Mucosa of descending colon (tissue), 3 donors: ENCODE measurements at regions of chr11 and their contacts with region 1.

Region 1: GRCh38 chr11:67317205-67317887 is 14.0 kb downstream of the SSH3 start:
- DNase-seq: peak; percentile 97 to 99 (median 98)
- ATAC-seq: peak; percentile 88
- H3K4me3 ChIP-seq: peak overlapping the region; percentile 74
- H3K4me1 ChIP-seq: peaks cover 11% of the 10 kb centered on the region
- CTCF ChIP-seq: peak; percentile 74

Region 2: GRCh38 chr11:67265633-67266423 is 51.5 kb before region 1 on chr11:
- intact Hi-C with region 1: loop called in 1 of 2 experiments (anchors 5 kb)
- DNase-seq: peak; percentile 84 to 91 (median 86)
- ATAC-seq: peak; percentile 60
- H3K4me3 ChIP-seq: no peak overlapping the region
- H3K4me1 ChIP-seq: peaks cover 62% of the 10 kb centered on the region
- CTCF ChIP-seq: peak; percentile 74

Region 3: GRCh38 chr11:67420646-67421420 is 103.5 kb after region 1 on chr11:
- intact Hi-C with region 1: no loop called
- DNase-seq: peak; percentile 99 to 100 (median 99)
- ATAC-seq: peak; percentile 95
- H3K4me3 ChIP-seq: peak overlapping the region; percentile 34
- H3K4me1 ChIP-seq: peaks cover 22% of the 10 kb centered on the region
- CTCF ChIP-seq: peak; percentile 6